H1 (cell line): ENCODE measurements at regions of chr4 and their contacts with region 1.

Region 1: GRCh38 chr4:136864580-136865185 is 667.6 kb downstream of the PCDH18 start:
- DNase-seq: no peak
- H3K4me3 ChIP-seq: no peak overlapping the region
- H3K27ac ChIP-seq: no peak overlapping the region
- H3K4me1 ChIP-seq: peaks cover 0 to 4% (median 2%) of the 10 kb centered on the region in 4 experiments; a peak in 2 of 7 replicates
- H3K27me3 ChIP-seq: no peaks in the 10 kb centered on the region
- CTCF ChIP-seq: peak in 2 of 3 experiments; percentile 51 to 69; a peak in 2 of 4 replicates
- EP300 ChIP-seq: no peak
- POLR2A ChIP-seq: no peak
- RAD21 ChIP-seq: peak; percentile 93 to 96

Region 2: GRCh38 chr4:136687118-136687517 is 177.6 kb before region 1 on chr4:
- CTCF ChIA-PET with region 1: interaction called, 13 read pairs
- POLR2A ChIA-PET with region 1: no interaction called
- DNase-seq: peak in 1 of 2 experiments; percentile 49
- H3K4me3 ChIP-seq: no peak overlapping the region
- H3K27ac ChIP-seq: no peak overlapping the region
- H3K4me1 ChIP-seq: no peaks in the 10 kb centered on the region; a peak in 1 of 7 replicates
- H3K27me3 ChIP-seq: no peaks in the 10 kb centered on the region
- CTCF ChIP-seq: peak; percentile 6 to 42 (median 37)
- EP300 ChIP-seq: no peak
- POLR2A ChIP-seq: no peak
- RAD21 ChIP-seq: peak; percentile 65 to 71

Region 3: GRCh38 chr4:136713140-136713539 is 151.5 kb before region 1 on chr4:
- CTCF ChIA-PET with region 1: interaction called, 11 read pairs
- POLR2A ChIA-PET with region 1: no interaction called
- DNase-seq: peak in 1 of 2 experiments; percentile 19
- H3K4me3 ChIP-seq: no peak overlapping the region
- H3K27ac ChIP-seq: no peak overlapping the region
- H3K4me1 ChIP-seq: no peaks in the 10 kb centered on the region
- H3K27me3 ChIP-seq: no peaks in the 10 kb centered on the region
- CTCF ChIP-seq: peak in 1 of 3 experiments; percentile 17; a peak in 1 of 4 replicates
- EP300 ChIP-seq: no peak
- POLR2A ChIP-seq: no peak
- RAD21 ChIP-seq: peak; percentile 57 to 65

Region 4: GRCh38 chr4:136725286-136726081 is 139.2 kb before region 1 on chr4:
- CTCF ChIA-PET with region 1: no interaction called
- POLR2A ChIA-PET with region 1: no interaction called
- DNase-seq: no peak
- H3K4me3 ChIP-seq: no peak overlapping the region
- H3K27ac ChIP-seq: no peak overlapping the region
- H3K4me1 ChIP-seq: no peaks in the 10 kb centered on the region
- H3K27me3 ChIP-seq: no peaks in the 10 kb centered on the region
- CTCF ChIP-seq: no peak
- EP300 ChIP-seq: no peak
- POLR2A ChIP-seq: no peak
- RAD21 ChIP-seq: no peak

Region 5: GRCh38 chr4:136918772-136919171 is 54.1 kb after region 1 on chr4:
- CTCF ChIA-PET with region 1: no interaction called
- POLR2A ChIA-PET with region 1: no interaction called
- DNase-seq: no peak
- H3K4me3 ChIP-seq: no peak overlapping the region
- H3K27ac ChIP-seq: no peak overlapping the region
- H3K4me1 ChIP-seq: no peaks in the 10 kb centered on the region
- H3K27me3 ChIP-seq: no peaks in the 10 kb centered on the region
- CTCF ChIP-seq: no peak
- EP300 ChIP-seq: no peak
- POLR2A ChIP-seq: no peak
- RAD21 ChIP-seq: no peak